ENCODE measurements at regions of chr9 and their contacts with region 1.

Region 1: GRCh38 chr9:31950756-31951155 is 433.7 kb upstream of the ACO1 start:
- DNase-seq: no peak
- H3K4me3 ChIP-seq: no peak overlapping the region
- H3K27ac ChIP-seq: no peak overlapping the region
- H3K4me1 ChIP-seq: no peaks in the 10 kb centered on the region
- H3K27me3 ChIP-seq: no peaks in the 10 kb centered on the region
- CTCF ChIP-seq: no peak
- EP300 ChIP-seq: no peak
- POLR2A ChIP-seq: no peak

Region 2: GRCh38 chr9:31868830-31869229 is 81.9 kb before region 1 on chr9:
- in situ Hi-C with region 1: loop called in 1 of 4 experiments (anchors 25 kb)
- intact Hi-C with region 1: no loop called
- DNase-seq: no peak
- H3K4me3 ChIP-seq: no peak overlapping the region
- H3K27ac ChIP-seq: no peak overlapping the region
- H3K4me1 ChIP-seq: no peaks in the 10 kb centered on the region
- H3K27me3 ChIP-seq: no peaks in the 10 kb centered on the region
- CTCF ChIP-seq: no peak
- EP300 ChIP-seq: no peak
- POLR2A ChIP-seq: no peak

Region 3: DNA sequence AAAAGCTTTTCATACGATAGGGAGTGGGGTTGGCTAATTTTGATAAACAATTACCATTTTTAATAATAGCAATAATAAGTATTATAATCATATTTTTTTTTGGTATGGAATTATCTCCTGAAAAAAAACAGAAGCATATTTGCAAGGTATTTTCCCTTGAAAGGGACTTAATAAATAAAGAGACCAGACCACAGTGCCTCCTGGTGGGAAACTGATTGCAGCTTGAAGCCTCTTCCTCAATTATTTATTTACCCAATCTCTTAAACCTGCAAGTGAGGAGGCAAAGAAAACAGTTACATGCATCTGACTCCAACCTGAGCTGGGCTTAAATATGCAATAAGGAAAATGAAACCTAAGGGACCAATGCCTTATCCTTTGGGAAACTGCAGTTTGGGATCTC is 45.6 kb after region 1 on chr9:
- in situ Hi-C with region 1: no loop called
- intact Hi-C with region 1: no loop called
- DNase-seq: no peak
- H3K4me3 ChIP-seq: no peak overlapping the region
- H3K27ac ChIP-seq: no peak overlapping the region
- H3K4me1 ChIP-seq: no peaks in the 10 kb centered on the region
- H3K27me3 ChIP-seq: no peaks in the 10 kb centered on the region
- CTCF ChIP-seq: no peak
- EP300 ChIP-seq: no peak
- POLR2A ChIP-seq: no peak

Measured in transverse colon (tissue), 4 donors.